Calu3 (cell line): ENCODE measurements at regions of chr4 and their contacts with region 1.

Region 1: GRCh38 chr4:19971829-19972228 is 279.9 kb upstream of the SLIT2 start:
- DNase-seq: no peak
- H3K4me3 Mint-ChIP-seq: no peak overlapping the region
- H3K27ac Mint-ChIP-seq: no peak overlapping the region
- H3K4me1 Mint-ChIP-seq: no peaks in the 10 kb centered on the region
- H3K27me3 Mint-ChIP-seq: no peaks in the 10 kb centered on the region
- CTCF ChIP-seq: no peak

Region 2: GRCh38 chr4:19689511-19689910 is 282.3 kb before region 1 on chr4:
- CTCF ChIA-PET with region 1: interaction called, 12 read pairs
- intact Hi-C with region 1: no loop called
- DNase-seq: no peak
- H3K4me3 Mint-ChIP-seq: no peak overlapping the region
- H3K27ac Mint-ChIP-seq: peak overlapping the region; percentile 19
- H3K4me1 Mint-ChIP-seq: no peaks in the 10 kb centered on the region
- H3K27me3 Mint-ChIP-seq: no peaks in the 10 kb centered on the region
- CTCF ChIP-seq: no peak